GM12878 (cell line): ENCODE measurements at regions of chr11 and their contacts with region 1.

Region 1: GRCh38 chr11:73350908-73351636 is 25.1 kb upstream of the RELT start:
- DNase-seq: no peak
- ATAC-seq: peak; percentile 89
- H3K4me3 ChIP-seq: no peak overlapping the region
- H3K27ac ChIP-seq: no peak overlapping the region
- H3K4me1 ChIP-seq: no peaks in the 10 kb centered on the region
- H3K27me3 ChIP-seq: no peaks in the 10 kb centered on the region
- CTCF ChIP-seq: peak; percentile 94 to 99 (median 97)
- EP300 ChIP-seq: no peak
- POLR2A ChIP-seq: no peak
- RAD21 ChIP-seq: peak; percentile 96

Region 2: DNA sequence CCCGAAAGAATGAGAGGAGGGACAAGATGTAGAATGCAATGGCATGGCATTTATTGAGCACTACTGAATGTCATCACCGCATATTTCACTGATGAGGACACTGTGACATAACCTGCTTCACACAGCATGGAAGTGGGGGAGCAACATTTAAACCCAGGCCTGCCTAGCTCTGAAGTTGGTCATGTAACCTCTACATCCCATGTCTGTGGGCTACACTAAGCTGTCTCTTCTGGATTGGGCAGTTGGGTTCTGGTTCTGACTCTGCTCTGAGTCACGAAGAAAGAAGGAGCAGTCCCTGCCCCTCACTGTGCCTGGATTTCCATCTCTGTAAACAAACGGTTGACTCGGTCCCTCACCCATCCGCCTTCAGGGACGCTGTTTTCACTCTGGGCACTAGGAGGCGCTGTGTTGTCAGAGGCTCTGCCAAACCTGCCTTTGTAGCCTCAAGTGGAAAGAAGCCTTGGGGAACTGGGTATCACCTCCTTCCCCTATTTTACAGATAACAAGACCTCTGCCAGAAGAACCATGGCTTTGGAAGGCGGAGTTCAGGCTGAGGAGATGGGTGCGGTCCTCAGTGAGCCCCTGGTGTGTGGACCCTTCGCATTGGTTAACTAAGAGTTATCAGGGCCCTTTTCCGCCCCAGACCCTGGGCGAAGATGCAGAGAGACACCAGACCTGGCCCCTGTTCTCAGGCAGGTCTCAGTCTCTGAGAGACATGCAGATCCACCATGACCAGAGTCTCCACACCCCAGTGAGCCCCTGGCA is 55.7 kb before region 1 on chr11:
- CTCF ChIA-PET with region 1: interaction called, 15 read pairs
- POLR2A ChIA-PET with region 1: no interaction called
- RAD21 ChIA-PET with region 1: interaction called, 4 read pairs
- SMC1A ChIA-PET with region 1: interaction called, 6 read pairs
- in situ Hi-C with region 1: no loop called
- intact Hi-C with region 1: no loop called
- DNase-seq: peak; percentile 31
- ATAC-seq: peak; percentile 92
- H3K4me3 ChIP-seq: no peak overlapping the region
- H3K27ac ChIP-seq: no peak overlapping the region
- H3K4me1 ChIP-seq: no peaks in the 10 kb centered on the region
- H3K27me3 ChIP-seq: no peaks in the 10 kb centered on the region; a peak in 2 of 4 replicates
- CTCF ChIP-seq: peak; percentile 92 to 99 (median 98)
- EP300 ChIP-seq: no peak
- POLR2A ChIP-seq: no peak
- RAD21 ChIP-seq: peak; percentile 79

Region 3: GRCh38 chr11:73325036-73325981 is 25.8 kb before region 1 on chr11:
- CTCF ChIA-PET with region 1: interaction called, 11 read pairs
- POLR2A ChIA-PET with region 1: no interaction called
- RAD21 ChIA-PET with region 1: interaction called, 6 read pairs
- SMC1A ChIA-PET with region 1: interaction called, 4 read pairs
- in situ Hi-C with region 1: no loop called
- intact Hi-C with region 1: no loop called
- DNase-seq: peak; percentile 83
- ATAC-seq: peak; percentile 83
- H3K4me3 ChIP-seq: peak overlapping the region; percentile 38; the same call in 1 of the 2 replicates
- H3K27ac ChIP-seq: peak overlapping the region; percentile 99
- H3K4me1 ChIP-seq: peaks cover 80% of the 10 kb centered on the region
- H3K27me3 ChIP-seq: no peaks in the 10 kb centered on the region
- CTCF ChIP-seq: no peak
- EP300 ChIP-seq: no peak; a peak in 2 of 4 replicates
- POLR2A ChIP-seq: peak; percentile 70
- RAD21 ChIP-seq: no peak

Region 4: DNA sequence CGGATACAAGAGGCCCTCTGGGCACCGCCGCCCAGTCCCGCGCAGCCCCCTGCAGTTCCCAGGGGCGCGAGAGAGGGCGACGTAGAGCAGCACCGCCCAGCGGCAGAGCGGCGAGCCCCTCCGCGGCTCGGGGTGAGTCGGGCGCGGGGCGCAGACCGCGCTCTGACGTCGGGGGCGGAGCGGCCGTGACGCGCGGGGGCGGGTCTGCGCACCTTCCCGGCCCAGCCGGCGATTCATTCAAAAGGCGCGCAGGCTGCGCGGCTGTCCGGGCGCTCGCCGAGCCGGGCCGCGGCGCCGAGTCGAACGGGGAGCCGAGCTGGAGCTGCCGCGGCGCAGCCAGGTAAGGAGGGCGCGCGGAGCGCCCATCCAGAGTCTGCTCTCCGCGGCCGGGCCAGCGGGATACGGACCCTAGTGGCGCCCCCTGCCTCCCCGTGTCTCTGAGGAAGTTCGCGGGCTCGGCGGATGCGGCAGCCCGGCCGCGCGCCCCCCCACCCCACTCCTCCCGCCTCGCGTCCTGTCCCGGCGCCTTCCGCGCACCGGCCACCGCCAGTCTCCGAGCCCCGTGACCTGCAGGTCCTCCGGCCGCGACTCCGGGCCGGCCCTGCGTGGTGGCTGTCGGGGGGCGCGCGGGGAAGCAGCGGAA is 25.2 kb after region 1 on chr11 and contains the start of gene RELT:
- CTCF ChIA-PET with region 1: interaction called, 400 read pairs
- POLR2A ChIA-PET with region 1: no interaction called
- RAD21 ChIA-PET with region 1: interaction called, 9 read pairs
- SMC1A ChIA-PET with region 1: interaction called, 10 read pairs
- in situ Hi-C with region 1: no loop called
- intact Hi-C with region 1: no loop called
- DNase-seq: peak; percentile 65
- ATAC-seq: peak; percentile 75
- H3K4me3 ChIP-seq: peak within 1 kb of the TSS; percentile 81
- H3K27ac ChIP-seq: peak within 1 kb of the TSS; percentile 92
- H3K4me1 ChIP-seq: peaks cover 43% of the 10 kb centered on the region
- H3K27me3 ChIP-seq: no peaks in the 10 kb centered on the region
- CTCF ChIP-seq: peak; percentile 88 to 95 (median 90)
- EP300 ChIP-seq: no peak
- POLR2A ChIP-seq: no peak
- RAD21 ChIP-seq: peak; percentile 54
- polyA plus RNA-seq, gene RELT: 1.2 to 3.0 TPM

Region 5: DNA sequence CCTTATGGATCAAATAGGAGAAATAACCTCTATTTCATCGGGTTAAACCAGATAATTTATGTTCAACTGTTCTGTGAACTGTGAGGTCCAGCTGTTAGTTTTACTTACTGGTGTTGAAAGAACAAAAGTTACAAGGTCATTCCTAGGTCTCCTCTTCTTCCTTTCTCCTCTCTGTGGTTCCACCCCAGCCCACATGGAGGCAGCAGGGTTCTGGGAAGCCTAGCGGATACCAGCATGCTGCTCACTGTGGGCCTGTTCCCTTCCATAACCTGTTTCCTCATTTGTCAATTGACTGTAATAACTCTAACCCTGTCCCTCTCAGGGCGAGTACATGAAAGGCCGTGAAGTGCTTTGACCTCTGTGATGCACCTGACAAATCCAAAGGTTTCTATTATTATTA is 53.0 kb after region 1 on chr11:
- CTCF ChIA-PET with region 1: interaction called, 400 read pairs
- POLR2A ChIA-PET with region 1: no interaction called
- RAD21 ChIA-PET with region 1: interaction called, 14 read pairs
- SMC1A ChIA-PET with region 1: interaction called, 19 read pairs
- in situ Hi-C with region 1: no loop called
- intact Hi-C with region 1: no loop called
- DNase-seq: no peak
- ATAC-seq: no peak
- H3K4me3 ChIP-seq: no peak overlapping the region
- H3K27ac ChIP-seq: no peak overlapping the region
- H3K4me1 ChIP-seq: no peaks in the 10 kb centered on the region
- H3K27me3 ChIP-seq: no peaks in the 10 kb centered on the region
- CTCF ChIP-seq: peak in 2 of 3 experiments; percentile 13 to 31; a peak in 3 of 6 replicates
- EP300 ChIP-seq: no peak
- POLR2A ChIP-seq: no peak
- RAD21 ChIP-seq: peak; percentile 47

Region 6: DNA sequence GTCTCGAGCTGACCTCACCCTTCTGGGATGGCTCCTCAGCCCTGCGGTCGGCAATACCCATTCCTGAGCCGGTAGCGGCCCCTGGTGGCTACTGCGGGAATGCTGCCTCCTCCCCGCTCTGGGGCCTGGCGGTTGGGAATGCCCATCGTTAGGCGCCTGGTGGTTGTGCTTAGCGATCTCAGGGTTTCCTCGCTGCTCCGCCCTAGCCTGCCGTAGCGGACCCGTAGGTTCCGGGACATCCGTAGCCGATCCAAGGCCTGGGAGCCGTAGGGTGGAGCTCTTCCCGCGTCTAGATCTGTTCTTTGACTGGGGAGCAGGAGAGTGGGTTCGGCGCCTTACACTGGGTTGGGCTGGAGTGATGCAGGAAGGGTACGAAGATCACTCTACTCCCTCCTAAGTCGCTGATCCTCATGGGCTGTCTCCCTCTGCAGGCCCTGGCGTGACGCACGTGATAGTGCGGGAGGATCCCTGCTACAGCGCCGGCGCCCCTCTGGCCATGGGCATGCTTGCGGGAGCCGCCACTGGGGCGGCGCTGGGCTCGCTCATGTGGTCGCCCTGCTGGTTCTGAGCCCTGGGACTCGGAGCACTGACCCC is 310.1 kb after region 1 on chr11:
- CTCF ChIA-PET with region 1: interaction called, 147 read pairs
- POLR2A ChIA-PET with region 1: interaction called, 4 read pairs
- RAD21 ChIA-PET with region 1: interaction called, 64 read pairs
- SMC1A ChIA-PET with region 1: interaction called, 60 read pairs
- in situ Hi-C with region 1: loop called (anchors 5 kb)
- intact Hi-C with region 1: loop called (anchors 2 kb)
- DNase-seq: peak; percentile 37
- ATAC-seq: peak; percentile 98
- H3K4me3 ChIP-seq: no peak overlapping the region; the same call in 1 of the 2 replicates
- H3K27ac ChIP-seq: no peak overlapping the region
- H3K4me1 ChIP-seq: no peaks in the 10 kb centered on the region
- H3K27me3 ChIP-seq: no peaks in the 10 kb centered on the region
- CTCF ChIP-seq: peak; percentile 96 to 99 (median 98)
- EP300 ChIP-seq: no peak
- POLR2A ChIP-seq: no peak
- RAD21 ChIP-seq: peak; percentile 98